Activated B cell treated with CpG ODN at 0.5 μM for 24 hours (primary cell): ENCODE measurements at regions of chr1 and their contacts with region 1.

Region 1: GRCh38 chr1:23098463-23099170 is 70.0 kb downstream of the LUZP1 start:
- DNase-seq: no peak
- ATAC-seq: peak; percentile 83
- H3K4me3 Mint-ChIP-seq: no peak overlapping the region
- H3K27ac Mint-ChIP-seq: peak overlapping the region; percentile 43
- H3K4me1 Mint-ChIP-seq: peaks cover 20% of the 10 kb centered on the region
- H3K27me3 Mint-ChIP-seq: no peaks in the 10 kb centered on the region
- CTCF ChIP-seq: peak; percentile 85

Region 2: DNA sequence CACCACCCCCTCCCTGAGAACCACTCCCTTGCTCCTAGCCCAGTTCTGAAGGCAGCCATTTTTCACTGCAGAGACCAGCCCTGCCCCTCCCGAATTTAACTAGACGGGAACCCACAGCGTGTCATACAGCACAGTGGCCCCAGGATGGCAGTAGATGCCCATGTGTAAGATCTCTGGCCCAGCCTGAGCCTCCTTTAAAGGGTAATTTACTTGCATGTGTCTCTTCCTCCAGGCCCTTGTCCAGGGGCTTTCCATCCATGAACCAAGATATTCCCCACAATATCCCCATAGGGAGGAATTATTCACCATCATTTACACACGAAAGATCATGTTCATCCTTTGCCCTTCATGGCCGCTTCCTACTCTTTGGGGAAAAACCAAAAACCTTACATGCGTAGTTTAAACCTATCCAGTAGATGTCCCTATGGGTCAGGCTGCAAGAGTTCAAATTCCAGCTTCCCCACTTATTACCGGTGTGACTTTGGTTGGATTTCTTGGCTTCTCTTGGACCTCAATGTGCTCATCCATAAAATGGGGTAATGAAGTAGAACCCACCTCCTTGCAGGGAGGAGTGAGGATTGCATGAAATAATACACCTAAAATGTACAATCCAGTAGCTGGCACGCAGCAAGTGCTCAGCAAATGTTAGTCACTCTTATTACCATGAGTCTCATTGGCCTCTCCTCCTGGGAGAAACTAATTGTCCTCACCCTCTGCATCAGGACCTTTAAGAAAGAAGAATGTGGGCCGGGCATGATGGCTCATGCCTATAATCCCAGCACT is 122.0 kb before region 1 on chr1:
- CTCF ChIA-PET with region 1: no interaction called
- POLR2A ChIA-PET with region 1: no interaction called
- intact Hi-C with region 1: loop called (anchors 1 kb)
- DNase-seq: peak; percentile 23
- ATAC-seq: peak; percentile 94
- H3K4me3 Mint-ChIP-seq: no peak overlapping the region
- H3K27ac Mint-ChIP-seq: no peak overlapping the region
- H3K4me1 Mint-ChIP-seq: no peaks in the 10 kb centered on the region
- H3K27me3 Mint-ChIP-seq: peaks cover 25% of the 10 kb centered on the region
- CTCF ChIP-seq: no peak

Region 3: GRCh38 chr1:23114424-23115079 is 15.9 kb after region 1 on chr1:
- CTCF ChIA-PET with region 1: interaction called, 13 read pairs
- POLR2A ChIA-PET with region 1: interaction called, 3 read pairs
- intact Hi-C with region 1: loop called (anchors 2 kb)
- DNase-seq: no peak
- ATAC-seq: no peak
- H3K4me3 Mint-ChIP-seq: no peak overlapping the region
- H3K27ac Mint-ChIP-seq: peak overlapping the region; percentile 72
- H3K4me1 Mint-ChIP-seq: peaks cover 58% of the 10 kb centered on the region
- H3K27me3 Mint-ChIP-seq: no peaks in the 10 kb centered on the region
- CTCF ChIP-seq: no peak

Region 4: GRCh38 chr1:23177438-23178380 is 79.1 kb after region 1 on chr1:
- CTCF ChIA-PET with region 1: interaction called, 407 read pairs
- POLR2A ChIA-PET with region 1: interaction called, 4 read pairs
- intact Hi-C with region 1: no loop called
- DNase-seq: peak; percentile 66
- ATAC-seq: peak; percentile 97
- H3K4me3 Mint-ChIP-seq: peak overlapping the region; percentile 77
- H3K27ac Mint-ChIP-seq: peak overlapping the region; percentile 73
- H3K4me1 Mint-ChIP-seq: peaks cover 33% of the 10 kb centered on the region
- H3K27me3 Mint-ChIP-seq: peaks cover 4% of the 10 kb centered on the region
- CTCF ChIP-seq: no peak

Region 5: GRCh38 chr1:23196639-23197328 is 98.2 kb after region 1 on chr1:
- CTCF ChIA-PET with region 1: interaction called, 11 read pairs
- POLR2A ChIA-PET with region 1: no interaction called
- intact Hi-C with region 1: no loop called
- DNase-seq: no peak
- ATAC-seq: no peak
- H3K4me3 Mint-ChIP-seq: no peak overlapping the region
- H3K27ac Mint-ChIP-seq: no peak overlapping the region
- H3K4me1 Mint-ChIP-seq: no peaks in the 10 kb centered on the region
- H3K27me3 Mint-ChIP-seq: peaks cover 14% of the 10 kb centered on the region
- CTCF ChIP-seq: no peak

Region 6: GRCh38 chr1:23249787-23250454 is 151.3 kb after region 1 on chr1:
- CTCF ChIA-PET with region 1: no interaction called
- POLR2A ChIA-PET with region 1: no interaction called
- intact Hi-C with region 1: no loop called
- DNase-seq: no peak
- ATAC-seq: no peak
- H3K4me3 Mint-ChIP-seq: no peak overlapping the region
- H3K27ac Mint-ChIP-seq: no peak overlapping the region
- H3K4me1 Mint-ChIP-seq: no peaks in the 10 kb centered on the region
- H3K27me3 Mint-ChIP-seq: peaks cover 5% of the 10 kb centered on the region
- CTCF ChIP-seq: no peak

Region 7: GRCh38 chr1:23278717-23279116 is 180.1 kb after region 1 on chr1:
- CTCF ChIA-PET with region 1: no interaction called
- POLR2A ChIA-PET with region 1: no interaction called
- intact Hi-C with region 1: loop called (anchors 5 kb)
- DNase-seq: no peak
- ATAC-seq: no peak
- H3K4me3 Mint-ChIP-seq: no peak overlapping the region
- H3K27ac Mint-ChIP-seq: no peak overlapping the region
- H3K4me1 Mint-ChIP-seq: no peaks in the 10 kb centered on the region
- H3K27me3 Mint-ChIP-seq: peaks cover 15% of the 10 kb centered on the region
- CTCF ChIP-seq: no peak

Region 8: GRCh38 chr1:23539698-23540266 is 441.2 kb after region 1 on chr1:
- CTCF ChIA-PET with region 1: no interaction called
- POLR2A ChIA-PET with region 1: interaction called, 6 read pairs
- intact Hi-C with region 1: loop called (anchors 5 kb)
- DNase-seq: peak; percentile 84
- ATAC-seq: peak; percentile 92
- H3K4me3 Mint-ChIP-seq: peak overlapping the region; percentile 59
- H3K27ac Mint-ChIP-seq: peak overlapping the region; percentile 56
- H3K4me1 Mint-ChIP-seq: peaks cover 39% of the 10 kb centered on the region
- H3K27me3 Mint-ChIP-seq: no peaks in the 10 kb centered on the region
- CTCF ChIP-seq: peak; percentile 60